A673 (cell line): ENCODE measurements at regions of chr4 and their contacts with region 1.

Region 1: DNA sequence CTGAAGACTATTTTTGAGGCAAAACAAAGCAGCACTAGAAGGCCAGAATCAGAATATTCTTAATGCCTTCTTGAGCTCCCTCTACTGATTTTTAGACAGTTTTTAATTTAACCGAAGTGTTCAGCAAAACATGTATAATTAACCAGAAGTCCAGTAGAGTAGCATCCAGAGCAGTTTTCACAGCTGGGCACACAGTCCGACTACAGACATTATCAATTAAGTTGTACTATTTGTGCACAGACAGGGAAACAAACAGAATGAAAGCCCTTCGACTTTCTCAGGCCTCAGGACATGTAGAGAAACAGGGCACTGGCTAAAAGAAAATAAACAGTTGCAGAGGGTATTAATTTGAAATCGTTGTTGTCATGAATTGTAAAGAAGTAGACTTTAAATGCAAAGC is 11.9 kb downstream of the FSTL5 start:
- DNase-seq: no peak
- H3K4me3 ChIP-seq: no peak overlapping the region
- H3K27ac ChIP-seq: no peak overlapping the region
- H3K4me1 ChIP-seq: no peaks in the 10 kb centered on the region
- H3K27me3 ChIP-seq: no peaks in the 10 kb centered on the region
- CTCF ChIP-seq: no peak

Region 2: GRCh38 chr4:162209706-162210105 is 57.9 kb after region 1 on chr4:
- CTCF ChIA-PET with region 1: no interaction called
- POLR2A ChIA-PET with region 1: no interaction called
- intact Hi-C with region 1: loop called (anchors 2 kb)
- DNase-seq: no peak
- H3K4me3 ChIP-seq: no peak overlapping the region
- H3K27ac ChIP-seq: no peak overlapping the region
- H3K4me1 ChIP-seq: no peaks in the 10 kb centered on the region
- H3K27me3 ChIP-seq: no peaks in the 10 kb centered on the region
- CTCF ChIP-seq: no peak